ENCODE measurements at regions of chr9 and their contacts with region 1.

Region 1: DNA sequence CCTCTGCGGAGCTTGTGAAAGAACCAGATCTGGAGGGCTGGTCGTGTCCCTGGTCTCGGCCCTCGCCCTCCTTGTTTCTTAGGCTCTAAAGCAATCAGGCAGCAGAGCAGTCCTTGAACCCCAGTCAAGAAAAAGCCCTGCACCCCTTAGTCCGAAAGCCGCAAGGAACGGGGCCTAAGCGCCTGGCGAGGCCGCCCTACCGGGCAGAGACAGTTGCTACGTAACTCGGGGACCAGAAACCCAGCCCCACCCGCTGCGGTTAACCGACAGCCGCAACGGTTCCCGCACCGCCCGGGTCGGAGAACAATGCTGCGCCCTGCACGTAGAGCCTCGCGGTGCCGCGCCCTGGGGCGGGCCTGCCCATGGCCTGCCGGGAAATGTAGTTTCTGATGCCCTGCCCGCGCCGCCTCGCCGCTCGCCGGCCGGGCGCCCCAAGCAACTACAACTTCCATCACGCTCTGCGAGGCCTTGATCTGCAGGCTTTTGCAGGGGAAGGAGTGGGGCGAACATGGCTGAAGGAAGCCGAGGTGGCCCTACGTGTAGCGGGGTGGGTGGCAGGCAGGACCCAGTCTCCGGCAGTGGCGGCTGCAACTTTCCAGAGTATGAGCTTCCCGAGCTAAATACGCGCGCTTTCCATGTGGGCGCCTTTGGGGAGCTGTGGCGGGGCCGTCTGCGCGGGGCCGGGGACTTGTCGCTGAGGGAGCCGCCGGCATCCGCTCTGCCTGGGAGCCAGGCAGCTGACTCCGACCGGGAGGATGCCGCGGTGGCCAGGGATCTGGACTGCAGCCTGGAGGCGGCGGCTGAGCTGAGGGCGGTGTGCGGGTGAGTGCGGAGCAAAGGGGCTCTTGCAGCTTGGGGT is at the start of gene SNAPC3:
- DNase-seq: peak; percentile 94
- H3K4me3 Mint-ChIP-seq: peak within 1 kb of the TSS; percentile 79
- H3K27ac Mint-ChIP-seq: peak within 1 kb of the TSS; percentile 84
- H3K4me1 Mint-ChIP-seq: peaks cover 21% of the 10 kb centered on the region
- H3K27me3 Mint-ChIP-seq: no peaks in the 10 kb centered on the region
- CTCF ChIP-seq: no peak
- total RNA-seq, gene SNAPC3: 20.7 and 21.9 TPM in 2 replicates

Region 2: GRCh38 chr9:15295761-15296405 is 126.7 kb before region 1 on chr9:
- CTCF ChIA-PET with region 1: interaction called, 3 read pairs
- POLR2A ChIA-PET with region 1: interaction called, 20 read pairs
- intact Hi-C with region 1: no loop called
- DNase-seq: peak; percentile 61
- H3K4me3 Mint-ChIP-seq: peak overlapping the region; percentile 74
- H3K27ac Mint-ChIP-seq: peak overlapping the region; percentile 96
- H3K4me1 Mint-ChIP-seq: peaks cover 32% of the 10 kb centered on the region
- H3K27me3 Mint-ChIP-seq: no peaks in the 10 kb centered on the region
- CTCF ChIP-seq: no peak

Region 3: DNA sequence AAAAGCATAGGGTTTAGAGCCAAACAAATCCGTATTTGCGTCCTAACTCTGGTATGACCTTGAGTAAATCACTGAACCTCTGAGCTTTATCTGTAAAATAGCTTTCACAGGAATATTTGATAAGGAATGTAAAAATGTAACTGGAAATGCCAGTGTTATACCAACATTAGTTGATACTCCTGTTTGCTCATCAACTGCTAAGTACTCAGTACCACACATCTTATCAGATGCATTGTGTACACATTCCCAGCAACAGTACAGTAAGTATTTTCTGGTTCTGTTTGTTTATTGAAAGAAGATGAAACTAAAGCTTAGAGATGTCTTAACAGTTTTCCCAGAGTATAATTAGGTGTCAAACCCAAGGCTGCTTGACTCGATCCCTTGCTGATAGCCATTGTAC is 21.5 kb after region 1 on chr9:
- CTCF ChIA-PET with region 1: no interaction called
- POLR2A ChIA-PET with region 1: no interaction called
- intact Hi-C with region 1: no loop called
- DNase-seq: no peak
- H3K4me3 Mint-ChIP-seq: no peak overlapping the region
- H3K27ac Mint-ChIP-seq: no peak overlapping the region
- H3K4me1 Mint-ChIP-seq: no peaks in the 10 kb centered on the region
- H3K27me3 Mint-ChIP-seq: no peaks in the 10 kb centered on the region
- CTCF ChIP-seq: no peak

Region 4: GRCh38 chr9:15510789-15511575 is 88.4 kb after region 1 on chr9 and contains the start of gene PSIP1:
- CTCF ChIA-PET with region 1: interaction called, 3 read pairs
- POLR2A ChIA-PET with region 1: interaction called, 10 read pairs
- intact Hi-C with region 1: no loop called
- DNase-seq: peak; percentile 83
- H3K4me3 Mint-ChIP-seq: peak within 1 kb of the TSS; percentile 85
- H3K27ac Mint-ChIP-seq: peak within 1 kb of the TSS; percentile 100
- H3K4me1 Mint-ChIP-seq: peaks cover 34% of the 10 kb centered on the region
- H3K27me3 Mint-ChIP-seq: no peaks in the 10 kb centered on the region
- CTCF ChIP-seq: no peak
- total RNA-seq, gene PSIP1: 55.3 and 57.8 TPM in 2 replicates